Heart left ventricle (tissue), 16 donors: ENCODE measurements at regions of chr10 and their contacts with region 1.

Region 1: DNA sequence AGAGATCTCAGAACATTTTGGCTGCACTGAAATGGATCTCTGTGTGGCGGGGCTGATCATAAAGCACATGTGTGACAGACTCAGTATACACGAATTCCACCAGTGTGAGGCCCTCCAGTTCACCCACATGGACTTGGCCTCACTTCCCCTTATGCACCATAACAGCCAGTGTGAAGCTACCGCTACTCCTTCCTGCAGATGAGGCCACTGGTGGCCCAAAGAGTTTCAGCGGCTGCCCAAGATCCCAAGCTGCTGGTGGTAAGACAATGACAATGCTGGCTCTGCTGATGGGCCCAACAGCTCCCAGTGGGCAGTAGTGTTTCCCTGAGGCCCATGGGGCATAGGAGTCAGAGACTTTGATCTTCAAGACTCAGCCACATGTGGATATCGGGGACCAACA is 21.0 kb upstream of the C10orf71 start:
- DNase-seq: peak in 1 of 5 donors; percentile 7
- ATAC-seq: peak in 2 of 4 donors; percentile 8 to 16
- H3K4me3 ChIP-seq: no peak overlapping the region
- H3K27ac ChIP-seq: peak overlapping the region in 11 of 12 donors; percentile 26 to 90 (median 73)
- H3K4me1 ChIP-seq: peaks cover 0 to 42% (median 29%) of the 10 kb centered on the region in 12 donors
- H3K27me3 ChIP-seq: no peaks in the 10 kb centered on the region
- CTCF ChIP-seq: no peak
- POLR2A ChIP-seq: no peak

Region 2: GRCh38 chr10:49037187-49037586 is 240.8 kb before region 1 on chr10:
- intact Hi-C with region 1: no loop called
- DNase-seq: no peak
- ATAC-seq: no peak
- H3K4me3 ChIP-seq: no peak overlapping the region
- H3K27ac ChIP-seq: no peak overlapping the region
- H3K4me1 ChIP-seq: no peaks in the 10 kb centered on the region
- H3K27me3 ChIP-seq: no peaks in the 10 kb centered on the region
- CTCF ChIP-seq: no peak
- POLR2A ChIP-seq: no peak

Region 3: GRCh38 chr10:49225218-49225876 is 52.6 kb before region 1 on chr10:
- intact Hi-C with region 1: loop called in 1 of 10 experiments (anchors 5 kb)
- DNase-seq: peak in 3 of 5 donors; percentile 49 to 70 (median 52)
- ATAC-seq: peak; percentile 72 to 87 (median 82)
- H3K4me3 ChIP-seq: no peak overlapping the region
- H3K27ac ChIP-seq: peak overlapping the region in 7 of 12 donors; percentile 9 to 64 (median 48)
- H3K4me1 ChIP-seq: peaks cover 0 to 26% (median 2%) of the 10 kb centered on the region in 12 donors
- H3K27me3 ChIP-seq: no peaks in the 10 kb centered on the region
- CTCF ChIP-seq: no peak
- POLR2A ChIP-seq: no peak

Region 4: DNA sequence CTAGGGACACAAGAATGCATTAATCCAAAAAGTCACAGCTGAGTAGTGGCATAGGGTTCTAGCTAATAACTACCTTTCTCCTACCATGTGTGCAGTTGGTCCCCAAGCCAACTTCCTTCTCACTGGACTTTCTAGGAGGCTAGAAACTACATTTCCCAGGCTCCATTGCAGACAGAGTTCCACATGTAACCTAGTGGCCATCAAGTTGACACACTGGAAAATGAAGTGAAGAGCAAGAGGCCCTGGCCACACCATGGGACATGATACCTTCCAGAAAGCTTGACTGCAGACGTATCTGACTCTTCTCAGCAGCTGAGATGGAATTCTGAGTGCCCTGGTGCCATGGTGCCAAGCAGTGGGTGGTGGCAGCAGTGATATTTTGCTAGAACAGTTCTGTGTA is 40.0 kb before region 1 on chr10:
- intact Hi-C with region 1: no loop called
- DNase-seq: no peak
- ATAC-seq: no peak
- H3K4me3 ChIP-seq: no peak overlapping the region
- H3K27ac ChIP-seq: no peak overlapping the region
- H3K4me1 ChIP-seq: peaks cover 0 to 20% (median 12%) of the 10 kb centered on the region in 12 donors
- H3K27me3 ChIP-seq: no peaks in the 10 kb centered on the region
- CTCF ChIP-seq: no peak
- POLR2A ChIP-seq: no peak

Region 5: GRCh38 chr10:49379596-49380410 is 101.8 kb after region 1 on chr10:
- intact Hi-C with region 1: no loop called
- DNase-seq: no peak
- ATAC-seq: peak in 2 of 4 donors; percentile 35 to 68
- H3K4me3 ChIP-seq: no peak overlapping the region
- H3K27ac ChIP-seq: no peak overlapping the region
- H3K4me1 ChIP-seq: peaks cover 0 to 4% (median 0%) of the 10 kb centered on the region in 12 donors
- H3K27me3 ChIP-seq: peaks cover 0 to 12% (median 0%) of the 10 kb centered on the region in 9 donors
- CTCF ChIP-seq: peak in 8 of 12 donors; percentile 7 to 38 (median 18)
- POLR2A ChIP-seq: no peak